Naive thymus-derived CD4-positive, alpha-beta T cell (primary cell): ENCODE measurements at regions of chr20 and their contacts with region 1.

Region 1: DNA sequence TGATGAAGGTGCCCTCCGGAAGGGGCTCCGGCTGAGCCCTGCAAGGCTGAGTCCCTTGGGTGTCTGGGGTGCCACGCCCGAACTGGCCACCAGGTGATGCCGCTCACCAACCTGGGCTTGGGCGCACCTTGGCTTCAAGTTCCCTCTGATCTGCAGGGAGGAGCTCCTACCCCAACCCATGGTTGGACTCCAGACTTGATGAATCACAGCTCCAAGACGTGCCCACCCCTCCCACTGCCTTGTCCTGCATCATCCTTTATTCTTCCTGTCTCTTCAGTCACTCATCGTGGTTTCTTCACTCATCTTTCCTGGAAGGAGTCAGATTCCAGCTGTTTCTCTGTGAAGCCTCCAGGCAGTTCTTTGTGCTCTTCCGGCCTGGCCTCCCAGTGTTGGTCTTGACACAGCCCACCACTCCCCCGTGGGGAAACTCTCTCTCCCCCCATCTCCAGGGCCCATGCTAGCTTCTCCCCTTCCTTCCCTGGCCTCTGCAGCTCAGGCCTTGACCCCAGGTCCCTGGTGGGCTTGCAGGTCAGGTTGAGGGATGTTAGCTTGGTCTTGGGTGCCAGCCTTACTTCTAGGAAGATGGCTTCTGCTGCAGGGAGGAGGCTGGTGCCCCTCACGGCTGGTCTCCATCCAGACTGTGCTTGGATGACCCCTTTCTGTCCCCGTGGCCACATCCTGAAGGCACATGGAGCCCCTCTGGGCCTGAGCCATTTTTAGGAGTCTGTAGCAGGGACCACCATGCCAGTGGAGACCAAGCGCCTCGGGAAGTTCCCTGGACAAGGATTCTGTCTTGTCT is 2.6 kb upstream of the ZBP1 start:
- DNase-seq: peak in 8 of 9 donors; percentile 45 to 71 (median 66)
- ATAC-seq: peak; percentile 41
- H3K4me3 ChIP-seq: no peak overlapping the region
- H3K4me3 Mint-ChIP-seq: peak overlapping the region; percentile 10 to 89 (median 56)
- H3K27ac ChIP-seq: no peak overlapping the region
- H3K27ac Mint-ChIP-seq: peak overlapping the region; percentile 67 to 93 (median 84)
- H3K4me1 ChIP-seq: peaks cover 50 to 75% of the 10 kb centered on the region in 2 donors
- H3K4me1 Mint-ChIP-seq: peaks cover 48 to 98% (median 78%) of the 10 kb centered on the region in 7 donors
- H3K27me3 ChIP-seq: no peaks in the 10 kb centered on the region
- H3K27me3 Mint-ChIP-seq: peaks cover 0 to 20% (median 0%) of the 10 kb centered on the region in 5 donors

Region 2: DNA sequence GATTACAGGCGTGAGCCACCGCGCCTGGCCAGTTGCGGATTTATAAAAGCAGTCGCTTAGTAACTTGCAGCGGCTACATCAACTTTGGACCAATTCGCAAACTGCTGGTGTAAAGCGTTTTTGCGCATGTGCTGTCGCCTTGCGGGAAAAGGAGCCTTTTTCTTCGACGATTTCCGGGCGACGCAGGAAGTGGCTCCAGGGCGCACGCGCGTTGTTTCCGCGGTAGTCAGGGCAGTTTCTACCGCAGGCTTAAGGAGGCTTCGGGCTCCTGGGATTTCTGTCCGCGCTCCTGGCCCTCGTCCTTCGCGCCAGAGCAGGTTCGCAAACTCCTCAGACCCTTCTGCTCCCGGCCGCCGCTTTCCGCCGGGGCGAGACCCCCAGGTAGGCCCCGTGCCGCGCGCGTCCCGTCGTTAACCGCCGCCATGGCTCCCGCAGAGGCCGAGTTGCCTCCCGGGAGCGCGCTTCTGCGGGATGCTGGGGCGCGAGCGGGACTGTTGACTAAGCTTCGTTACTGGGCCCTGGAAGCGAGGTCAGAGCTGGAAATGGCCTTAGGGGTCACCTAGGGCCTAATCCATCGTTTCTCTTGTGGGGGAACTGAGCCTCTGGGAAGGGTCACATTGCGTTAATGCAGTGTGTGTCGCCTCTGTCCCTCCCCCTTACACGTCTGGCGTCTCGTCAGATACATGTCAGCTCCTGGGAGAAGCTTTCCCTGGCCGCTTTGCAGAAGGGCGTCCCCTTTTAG is 271.6 kb before region 1 on chr20 and contains the start of gene RAE1:
- CTCF ChIA-PET with region 1: interaction called, 5 read pairs
- POLR2A ChIA-PET with region 1: no interaction called
- intact Hi-C with region 1: loop called in 1 of 2 experiments (anchors 10 kb)
- DNase-seq: peak; percentile 81 to 92 (median 89)
- ATAC-seq: peak; percentile 88
- H3K4me3 ChIP-seq: peak within 1 kb of the TSS; percentile 81
- H3K4me3 Mint-ChIP-seq: peak within 1 kb of the TSS; percentile 89 to 97 (median 92)
- H3K27ac ChIP-seq: peak within 1 kb of the TSS; percentile 90
- H3K27ac Mint-ChIP-seq: peak within 1 kb of the TSS; percentile 81 to 93 (median 90)
- H3K4me1 ChIP-seq: peaks cover 0 to 19% of the 10 kb centered on the region in 2 donors
- H3K4me1 Mint-ChIP-seq: peaks cover 14 to 46% (median 29%) of the 10 kb centered on the region in 7 donors
- H3K27me3 ChIP-seq: no peaks in the 10 kb centered on the region
- H3K27me3 Mint-ChIP-seq: peaks cover 0 to 14% (median 0%) of the 10 kb centered on the region in 5 donors
- total RNA-seq, gene RAE1: 31.0 to 41.3 (median 35.2) TPM

Region 3: GRCh38 chr20:57432874-57433491 is 189.8 kb before region 1 on chr20:
- CTCF ChIA-PET with region 1: no interaction called
- POLR2A ChIA-PET with region 1: interaction called, 3 read pairs
- intact Hi-C with region 1: loop called in 1 of 2 experiments (anchors 1 kb)
- DNase-seq: peak in 8 of 9 donors; percentile 63 to 81 (median 76)
- ATAC-seq: peak; percentile 83
- H3K4me3 ChIP-seq: peak overlapping the region; percentile 34
- H3K4me3 Mint-ChIP-seq: peak overlapping the region; percentile 55 to 94 (median 78)
- H3K27ac ChIP-seq: peak overlapping the region; percentile 59
- H3K27ac Mint-ChIP-seq: peak overlapping the region; percentile 60 to 95 (median 90)
- H3K4me1 ChIP-seq: peaks cover 45 to 55% of the 10 kb centered on the region in 2 donors
- H3K4me1 Mint-ChIP-seq: peaks cover 49 to 77% (median 67%) of the 10 kb centered on the region in 7 donors
- H3K27me3 ChIP-seq: no peaks in the 10 kb centered on the region
- H3K27me3 Mint-ChIP-seq: peaks cover 0 to 7% (median 0%) of the 10 kb centered on the region in 5 donors

Region 4: DNA sequence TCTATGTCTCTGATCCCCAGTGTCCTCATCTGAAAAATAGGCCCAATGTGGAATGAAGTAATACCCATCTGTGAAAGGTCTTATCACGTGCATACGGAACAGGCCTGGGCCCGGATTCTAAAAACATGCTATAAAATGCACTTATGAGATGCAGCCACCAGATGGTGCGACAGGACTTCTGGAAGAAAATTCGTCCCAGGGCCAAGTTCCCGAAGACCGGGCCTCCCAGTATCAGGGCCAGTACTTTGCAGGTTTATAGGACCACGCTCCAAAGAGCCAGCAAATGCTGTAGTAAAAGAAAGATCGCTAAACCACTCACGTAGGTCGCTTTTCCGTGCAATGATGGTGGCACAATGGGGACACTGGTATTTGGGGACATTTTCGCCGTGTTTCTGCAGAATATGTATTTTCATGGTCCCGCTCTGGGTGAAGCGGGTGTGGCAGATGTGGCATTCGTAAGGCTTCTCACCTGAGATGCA is 108.5 kb before region 1 on chr20:
- CTCF ChIA-PET with region 1: no interaction called
- POLR2A ChIA-PET with region 1: no interaction called
- intact Hi-C with region 1: no loop called
- DNase-seq: peak in 6 of 9 donors; percentile 13 to 31 (median 23)
- ATAC-seq: peak; percentile 45
- H3K4me3 ChIP-seq: no peak overlapping the region
- H3K4me3 Mint-ChIP-seq: no peak overlapping the region
- H3K27ac ChIP-seq: no peak overlapping the region
- H3K27ac Mint-ChIP-seq: peak overlapping the region in 1 of 9 donors; percentile 27
- H3K4me1 ChIP-seq: no peaks in the 10 kb centered on the region
- H3K4me1 Mint-ChIP-seq: no peaks in the 10 kb centered on the region
- H3K27me3 ChIP-seq: peaks cover 0 to 3% of the 10 kb centered on the region in 2 donors
- H3K27me3 Mint-ChIP-seq: peaks cover 0 to 14% (median 5%) of the 10 kb centered on the region in 5 donors

Region 5: DNA sequence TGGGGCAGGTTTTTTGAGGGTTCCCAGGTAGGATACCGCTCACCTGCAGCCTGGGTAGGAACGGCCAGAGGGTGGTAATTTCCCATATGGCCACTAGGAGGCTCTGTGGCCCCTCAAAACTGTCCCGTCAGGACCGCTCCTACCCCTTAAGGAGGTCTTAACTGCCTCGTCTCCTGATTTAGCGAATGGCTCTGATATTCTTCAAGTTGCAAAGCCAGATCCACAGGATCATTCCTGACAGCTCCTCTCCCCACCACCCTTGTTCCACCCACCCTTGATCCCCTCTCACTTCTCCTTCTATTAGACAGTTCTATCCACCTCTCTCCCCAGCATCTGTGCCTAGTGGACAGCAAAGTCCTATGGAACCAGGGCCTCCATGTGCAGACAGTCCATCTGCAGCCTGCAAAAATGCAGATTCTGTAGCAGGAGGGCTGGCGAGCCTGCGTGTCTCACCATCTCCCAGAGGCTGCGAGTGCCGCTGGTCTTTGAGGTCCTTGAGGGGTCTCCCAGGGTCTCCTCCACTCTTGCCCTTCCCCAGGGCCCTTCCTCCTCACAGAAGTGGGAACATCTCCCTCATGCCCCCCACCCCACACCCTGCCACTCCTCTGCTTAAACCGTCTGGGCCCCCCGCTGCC is 31.7 kb after region 1 on chr20:
- CTCF ChIA-PET with region 1: interaction called, 23 read pairs
- POLR2A ChIA-PET with region 1: interaction called, 14 read pairs
- intact Hi-C with region 1: loop called (anchors 1 kb)
- DNase-seq: peak in 8 of 9 donors; percentile 26 to 68 (median 59)
- ATAC-seq: peak; percentile 80
- H3K4me3 ChIP-seq: no peak overlapping the region
- H3K4me3 Mint-ChIP-seq: peak overlapping the region in 3 of 10 donors; percentile 2 to 46 (median 19)
- H3K27ac ChIP-seq: no peak overlapping the region
- H3K27ac Mint-ChIP-seq: peak overlapping the region in 5 of 9 donors; percentile 19 to 92 (median 56)
- H3K4me1 ChIP-seq: peaks cover 13 to 17% of the 10 kb centered on the region in 2 donors
- H3K4me1 Mint-ChIP-seq: peaks cover 14 to 42% (median 34%) of the 10 kb centered on the region in 7 donors
- H3K27me3 ChIP-seq: no peaks in the 10 kb centered on the region
- H3K27me3 Mint-ChIP-seq: peaks cover 0 to 11% (median 0%) of the 10 kb centered on the region in 5 donors

Region 6: GRCh38 chr20:57709931-57710799 is 87.4 kb after region 1 on chr20 and contains the start of gene PMEPA1:
- CTCF ChIA-PET with region 1: interaction called, 4 read pairs
- POLR2A ChIA-PET with region 1: interaction called, 36 read pairs
- intact Hi-C with region 1: loop called (anchors 1 to 2 kb)
- DNase-seq: peak; percentile 91 to 95 (median 93)
- ATAC-seq: peak; percentile 96
- H3K4me3 ChIP-seq: peak within 1 kb of the TSS; percentile 98
- H3K4me3 Mint-ChIP-seq: peak within 1 kb of the TSS; percentile 82 to 97 (median 94)
- H3K27ac ChIP-seq: peak within 1 kb of the TSS; percentile 88
- H3K27ac Mint-ChIP-seq: peak within 1 kb of the TSS; percentile 46 to 97 (median 95)
- H3K4me1 ChIP-seq: peaks cover 11 to 23% of the 10 kb centered on the region in 2 donors
- H3K4me1 Mint-ChIP-seq: peaks cover 15 to 55% (median 44%) of the 10 kb centered on the region in 7 donors
- H3K27me3 ChIP-seq: peaks cover 0 to 7% of the 10 kb centered on the region in 2 donors
- H3K27me3 Mint-ChIP-seq: peaks cover 0 to 51% (median 0%) of the 10 kb centered on the region in 5 donors
- total RNA-seq, gene PMEPA1: 0.44 to 10.0 (median 9.0) TPM

Region 7: GRCh38 chr20:57727863-57728262 is 105.1 kb after region 1 on chr20:
- CTCF ChIA-PET with region 1: no interaction called
- POLR2A ChIA-PET with region 1: no interaction called
- intact Hi-C with region 1: no loop called
- DNase-seq: no peak
- ATAC-seq: no peak
- H3K4me3 ChIP-seq: no peak overlapping the region
- H3K4me3 Mint-ChIP-seq: no peak overlapping the region
- H3K27ac ChIP-seq: no peak overlapping the region
- H3K27ac Mint-ChIP-seq: peak overlapping the region in 1 of 9 donors; percentile 21
- H3K4me1 ChIP-seq: no peaks in the 10 kb centered on the region
- H3K4me1 Mint-ChIP-seq: peaks cover 0 to 6% (median 0%) of the 10 kb centered on the region in 7 donors
- H3K27me3 ChIP-seq: no peaks in the 10 kb centered on the region
- H3K27me3 Mint-ChIP-seq: peaks cover 0 to 24% (median 9%) of the 10 kb centered on the region in 5 donors

Region 8: GRCh38 chr20:57800791-57801430 is 178.1 kb after region 1 on chr20:
- CTCF ChIA-PET with region 1: no interaction called
- POLR2A ChIA-PET with region 1: no interaction called
- intact Hi-C with region 1: no loop called
- DNase-seq: no peak
- ATAC-seq: no peak
- H3K4me3 ChIP-seq: no peak overlapping the region
- H3K4me3 Mint-ChIP-seq: no peak overlapping the region
- H3K27ac ChIP-seq: no peak overlapping the region
- H3K27ac Mint-ChIP-seq: peak overlapping the region in 2 of 9 donors; percentile 29 to 42
- H3K4me1 ChIP-seq: no peaks in the 10 kb centered on the region
- H3K4me1 Mint-ChIP-seq: no peaks in the 10 kb centered on the region
- H3K27me3 ChIP-seq: no peaks in the 10 kb centered on the region
- H3K27me3 Mint-ChIP-seq: peaks cover 0 to 4% (median 0%) of the 10 kb centered on the region in 5 donors

Region 9: GRCh38 chr20:58209652-58210397 is 587.0 kb after region 1 on chr20:
- CTCF ChIA-PET with region 1: interaction called, 4 read pairs
- POLR2A ChIA-PET with region 1: no interaction called
- intact Hi-C with region 1: loop called in 1 of 2 experiments (anchors 1 kb)
- DNase-seq: peak; percentile 73 to 93 (median 85)
- ATAC-seq: peak; percentile 96
- H3K4me3 ChIP-seq: no peak overlapping the region
- H3K4me3 Mint-ChIP-seq: peak overlapping the region in 5 of 10 donors; percentile 3 to 62 (median 32)
- H3K27ac ChIP-seq: peak overlapping the region; percentile 39
- H3K27ac Mint-ChIP-seq: peak overlapping the region in 8 of 9 donors; percentile 7 to 83 (median 72)
- H3K4me1 ChIP-seq: peaks cover 0 to 3% of the 10 kb centered on the region in 2 donors
- H3K4me1 Mint-ChIP-seq: peaks cover 0 to 8% (median 0%) of the 10 kb centered on the region in 7 donors
- H3K27me3 ChIP-seq: no peaks in the 10 kb centered on the region
- H3K27me3 Mint-ChIP-seq: peaks cover 0 to 20% (median 4%) of the 10 kb centered on the region in 5 donors

Region 10: GRCh38 chr20:58888521-58889333 is 1265.9 kb after region 1 on chr20:
- CTCF ChIA-PET with region 1: no interaction called
- POLR2A ChIA-PET with region 1: interaction called, 3 read pairs
- intact Hi-C with region 1: loop called (anchors 5 to 10 kb)
- DNase-seq: peak; percentile 64 to 91 (median 86)
- ATAC-seq: peak; percentile 76
- H3K4me3 ChIP-seq: peak overlapping the region; percentile 68
- H3K4me3 Mint-ChIP-seq: peak overlapping the region; percentile 81 to 94 (median 87)
- H3K27ac ChIP-seq: peak overlapping the region; percentile 95
- H3K27ac Mint-ChIP-seq: peak overlapping the region; percentile 67 to 97 (median 90)
- H3K4me1 ChIP-seq: peaks cover 4 to 6% of the 10 kb centered on the region in 2 donors
- H3K4me1 Mint-ChIP-seq: peaks cover 15 to 46% (median 37%) of the 10 kb centered on the region in 7 donors
- H3K27me3 ChIP-seq: no peaks in the 10 kb centered on the region
- H3K27me3 Mint-ChIP-seq: peaks cover 0 to 3% (median 0%) of the 10 kb centered on the region in 5 donors